ENCODE measurements at regions of chr2 and their contacts with region 1.

Region 1: GRCh38 chr2:143110758-143111428 is 18.3 kb upstream of the ARHGAP15 start:
- DNase-seq: peak; percentile 39 to 88 (median 54)
- ATAC-seq: peak; percentile 93
- H3K4me3 ChIP-seq: no peak overlapping the region
- H3K4me3 Mint-ChIP-seq: no peak overlapping the region
- H3K27ac ChIP-seq: peak overlapping the region in 1 of 2 donors; percentile 20
- H3K27ac Mint-ChIP-seq: peak overlapping the region; percentile 34
- H3K4me1 ChIP-seq: peaks cover 5% of the 10 kb centered on the region
- H3K4me1 Mint-ChIP-seq: peaks cover 42% of the 10 kb centered on the region
- H3K27me3 ChIP-seq: no peaks in the 10 kb centered on the region
- H3K27me3 Mint-ChIP-seq: no peaks in the 10 kb centered on the region
- CTCF ChIP-seq: peak; percentile 83

Region 2: DNA sequence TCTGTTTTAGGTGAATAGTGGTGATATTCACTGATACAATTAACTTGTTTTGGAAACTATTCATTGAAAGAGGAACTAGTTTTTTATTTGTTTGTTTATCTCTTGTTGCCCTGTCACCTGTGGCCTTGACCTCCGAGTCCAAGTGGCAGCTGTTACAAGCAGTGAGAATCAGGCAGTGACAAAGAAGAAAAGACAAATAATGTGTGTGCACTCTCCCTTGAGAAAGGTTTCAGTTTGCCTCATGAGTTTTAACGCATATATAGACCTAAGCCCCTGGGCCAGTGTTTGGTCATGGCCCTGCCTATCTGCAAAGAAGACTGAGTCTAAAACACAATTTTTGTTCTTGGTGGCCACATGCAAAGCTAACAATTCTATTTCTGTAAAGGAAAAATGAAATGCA is 218.2 kb before region 1 on chr2:
- CTCF ChIA-PET with region 1: no interaction called
- POLR2A ChIA-PET with region 1: no interaction called
- intact Hi-C with region 1: no loop called
- DNase-seq: no peak
- ATAC-seq: no peak
- H3K4me3 ChIP-seq: no peak overlapping the region
- H3K4me3 Mint-ChIP-seq: no peak overlapping the region
- H3K27ac ChIP-seq: no peak overlapping the region
- H3K27ac Mint-ChIP-seq: no peak overlapping the region
- H3K4me1 ChIP-seq: no peaks in the 10 kb centered on the region
- H3K4me1 Mint-ChIP-seq: no peaks in the 10 kb centered on the region
- H3K27me3 ChIP-seq: no peaks in the 10 kb centered on the region
- H3K27me3 Mint-ChIP-seq: no peaks in the 10 kb centered on the region
- CTCF ChIP-seq: no peak

Region 3: DNA sequence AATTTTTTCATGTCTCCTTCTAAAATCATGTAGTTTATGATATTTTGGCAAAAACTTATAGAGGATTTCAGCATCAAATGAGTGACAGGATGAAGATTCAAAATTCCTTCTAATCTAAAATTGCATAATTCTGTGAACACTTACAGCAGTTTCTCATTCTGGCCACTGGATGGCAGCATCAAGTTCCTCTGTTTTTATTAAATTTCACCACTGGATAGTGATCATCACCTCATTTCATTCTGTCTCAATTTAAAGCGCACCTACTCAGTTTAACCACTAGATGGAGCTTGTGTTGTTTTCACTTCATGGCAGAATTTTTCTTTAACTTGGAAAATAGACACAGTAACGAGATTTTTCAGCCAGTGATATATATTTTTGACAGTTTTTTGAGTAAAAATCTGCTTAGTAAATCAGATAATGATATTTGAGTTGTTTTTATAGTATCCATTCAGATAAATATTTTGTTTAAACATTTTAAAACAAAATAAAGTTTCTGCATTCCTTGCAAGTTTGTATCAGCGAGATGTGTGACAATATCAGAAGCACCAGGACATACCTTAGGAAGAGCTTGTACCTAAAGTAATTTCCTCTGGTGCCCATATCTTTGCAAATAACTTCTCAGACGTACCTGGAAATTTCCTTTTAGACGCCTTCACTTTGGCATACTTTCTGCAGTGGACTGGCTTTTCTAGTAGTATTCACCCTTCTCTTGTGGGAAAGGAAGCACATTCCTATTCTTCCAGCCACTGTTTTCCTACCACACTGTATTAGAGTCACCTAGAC is 76.4 kb before region 1 on chr2:
- CTCF ChIA-PET with region 1: interaction called, 8 read pairs
- POLR2A ChIA-PET with region 1: interaction called, 3 read pairs
- intact Hi-C with region 1: loop called in 1 of 2 experiments (anchors 5 kb)
- DNase-seq: peak; percentile 20 to 88 (median 38)
- ATAC-seq: peak; percentile 100
- H3K4me3 ChIP-seq: no peak overlapping the region
- H3K4me3 Mint-ChIP-seq: no peak overlapping the region
- H3K27ac ChIP-seq: no peak overlapping the region
- H3K27ac Mint-ChIP-seq: no peak overlapping the region
- H3K4me1 ChIP-seq: no peaks in the 10 kb centered on the region
- H3K4me1 Mint-ChIP-seq: no peaks in the 10 kb centered on the region
- H3K27me3 ChIP-seq: no peaks in the 10 kb centered on the region
- H3K27me3 Mint-ChIP-seq: peaks cover 3% of the 10 kb centered on the region
- CTCF ChIP-seq: peak; percentile 98

Region 4: DNA sequence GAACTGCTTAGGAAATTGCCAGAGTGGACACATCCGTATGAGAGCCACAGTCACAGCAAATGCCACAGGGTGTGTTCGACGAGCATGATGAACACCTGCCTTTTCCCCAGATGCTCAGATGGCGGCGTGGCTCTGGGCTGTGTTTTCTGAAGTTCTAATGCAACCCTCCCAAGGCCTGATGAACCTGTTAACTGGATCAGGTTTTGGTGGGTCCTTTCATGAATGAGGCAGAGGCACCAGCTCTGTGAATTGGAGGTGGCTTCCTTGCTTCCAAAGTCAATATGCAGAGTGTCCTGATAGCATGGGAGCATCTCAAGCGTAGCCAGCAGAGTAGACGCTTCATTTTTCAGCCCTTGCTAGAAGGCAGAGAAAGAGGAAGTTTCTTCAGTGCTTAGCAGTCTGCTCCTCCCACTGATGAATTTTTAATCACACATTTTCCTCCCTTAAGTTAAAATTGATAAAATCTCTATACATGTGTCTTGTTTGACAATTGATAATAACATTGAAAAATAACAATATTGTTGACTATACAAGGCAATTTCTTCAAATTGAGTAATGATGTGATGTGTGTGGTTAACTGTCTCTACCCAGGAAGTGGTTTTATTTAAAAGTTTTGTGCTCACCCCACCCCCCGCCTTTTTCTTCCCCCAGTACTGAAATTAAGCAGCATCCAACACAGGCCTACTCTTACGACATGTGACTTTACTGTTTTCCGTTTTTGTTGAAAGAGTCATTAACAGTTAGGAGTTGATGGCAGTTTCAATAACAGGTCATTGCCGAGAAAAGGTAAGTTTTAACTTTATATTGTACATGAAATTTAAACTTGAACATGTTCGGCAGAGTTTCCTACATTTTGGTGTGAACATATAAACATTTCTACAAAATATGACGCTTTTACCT is 18.0 kb after region 1 on chr2 and contains the start of gene ARHGAP15:
- CTCF ChIA-PET with region 1: interaction called, 27 read pairs
- POLR2A ChIA-PET with region 1: interaction called, 34 read pairs
- intact Hi-C with region 1: loop called in 1 of 2 experiments (anchors 1 kb)
- DNase-seq: peak; percentile 55 to 93 (median 67)
- ATAC-seq: peak; percentile 85
- H3K4me3 ChIP-seq: peak within 1 kb of the TSS; percentile 58
- H3K4me3 Mint-ChIP-seq: peak within 1 kb of the TSS; percentile 85
- H3K27ac ChIP-seq: peak within 1 kb of the TSS; percentile 78 to 94
- H3K27ac Mint-ChIP-seq: no peak within 1 kb of the TSS
- H3K4me1 ChIP-seq: peaks cover 52% of the 10 kb centered on the region
- H3K4me1 Mint-ChIP-seq: peaks cover 44% of the 10 kb centered on the region
- H3K27me3 ChIP-seq: no peaks in the 10 kb centered on the region
- H3K27me3 Mint-ChIP-seq: no peaks in the 10 kb centered on the region
- CTCF ChIP-seq: peak; percentile 25
- total RNA-seq, gene ARHGAP15: 158 to 165 TPM

Region 5: DNA sequence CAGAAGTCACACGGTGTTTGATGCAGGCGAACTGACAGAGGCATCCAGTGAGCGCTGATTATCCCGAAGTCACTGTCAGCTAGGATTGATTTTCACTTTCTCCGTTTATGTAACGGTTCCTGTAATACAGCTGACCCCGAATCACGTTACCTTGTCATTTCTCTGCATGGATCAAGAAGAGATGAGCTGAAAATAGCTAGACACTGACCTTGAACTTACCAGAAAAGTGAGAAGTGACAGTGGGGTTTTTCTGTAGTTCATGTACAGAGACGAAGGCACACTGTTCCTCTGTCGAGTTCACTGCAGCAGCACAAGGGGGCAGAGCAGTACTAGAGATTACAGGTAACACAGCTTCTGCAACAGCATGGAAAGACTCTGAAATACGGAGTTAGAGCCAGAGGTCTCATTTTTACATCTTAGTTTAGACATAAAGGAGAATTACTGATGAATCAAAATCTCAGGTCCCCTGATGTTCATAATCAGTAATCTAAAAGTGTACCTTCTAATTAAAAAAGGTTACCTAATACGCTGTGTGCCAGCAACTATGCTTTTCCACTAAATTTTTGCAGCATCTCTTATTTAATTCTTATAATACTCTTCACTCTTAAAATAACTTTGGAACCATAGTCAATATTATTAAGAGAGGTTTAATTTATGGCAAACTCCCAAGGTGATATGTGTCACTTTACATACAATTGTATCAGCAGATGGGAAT is 51.4 kb after region 1 on chr2:
- CTCF ChIA-PET with region 1: interaction called, 21 read pairs
- POLR2A ChIA-PET with region 1: interaction called, 20 read pairs
- intact Hi-C with region 1: loop called (anchors 2 kb)
- DNase-seq: peak; percentile 24 to 86 (median 55)
- ATAC-seq: peak; percentile 99
- H3K4me3 ChIP-seq: no peak overlapping the region
- H3K4me3 Mint-ChIP-seq: peak overlapping the region; percentile 2
- H3K27ac ChIP-seq: no peak overlapping the region
- H3K27ac Mint-ChIP-seq: peak overlapping the region; percentile 84
- H3K4me1 ChIP-seq: peaks cover 13% of the 10 kb centered on the region
- H3K4me1 Mint-ChIP-seq: peaks cover 95% of the 10 kb centered on the region
- H3K27me3 ChIP-seq: no peaks in the 10 kb centered on the region
- H3K27me3 Mint-ChIP-seq: no peaks in the 10 kb centered on the region
- CTCF ChIP-seq: peak; percentile 82

Region 6: GRCh38 chr2:143217512-143218115 is 106.7 kb after region 1 on chr2:
- CTCF ChIA-PET with region 1: interaction called, 25 read pairs
- POLR2A ChIA-PET with region 1: interaction called, 8 read pairs
- intact Hi-C with region 1: loop called (anchors 1 kb)
- DNase-seq: no peak
- ATAC-seq: no peak
- H3K4me3 ChIP-seq: no peak overlapping the region
- H3K4me3 Mint-ChIP-seq: no peak overlapping the region
- H3K27ac ChIP-seq: peak overlapping the region in 1 of 2 donors; percentile 6
- H3K27ac Mint-ChIP-seq: peak overlapping the region; percentile 65
- H3K4me1 ChIP-seq: peaks cover 5% of the 10 kb centered on the region
- H3K4me1 Mint-ChIP-seq: peaks cover 68% of the 10 kb centered on the region
- H3K27me3 ChIP-seq: no peaks in the 10 kb centered on the region
- H3K27me3 Mint-ChIP-seq: no peaks in the 10 kb centered on the region
- CTCF ChIP-seq: no peak

Measured in CD4-positive, alpha-beta T cell (primary cell).